ENCODE measurements at regions of chr13 and their contacts with region 1.

Region 1: GRCh38 chr13:39263033-39263432 is 224.8 kb downstream of the NHLRC3 start:
- DNase-seq: peak; percentile 55
- CTCF ChIP-seq: peak; percentile 74

Region 2: GRCh38 chr13:39051157-39051556 is 211.9 kb before region 1 on chr13:
- CTCF ChIA-PET with region 1: interaction called, 11 read pairs
- POLR2A ChIA-PET with region 1: no interaction called
- DNase-seq: peak; percentile 23
- CTCF ChIP-seq: peak; percentile 46

Region 3: DNA sequence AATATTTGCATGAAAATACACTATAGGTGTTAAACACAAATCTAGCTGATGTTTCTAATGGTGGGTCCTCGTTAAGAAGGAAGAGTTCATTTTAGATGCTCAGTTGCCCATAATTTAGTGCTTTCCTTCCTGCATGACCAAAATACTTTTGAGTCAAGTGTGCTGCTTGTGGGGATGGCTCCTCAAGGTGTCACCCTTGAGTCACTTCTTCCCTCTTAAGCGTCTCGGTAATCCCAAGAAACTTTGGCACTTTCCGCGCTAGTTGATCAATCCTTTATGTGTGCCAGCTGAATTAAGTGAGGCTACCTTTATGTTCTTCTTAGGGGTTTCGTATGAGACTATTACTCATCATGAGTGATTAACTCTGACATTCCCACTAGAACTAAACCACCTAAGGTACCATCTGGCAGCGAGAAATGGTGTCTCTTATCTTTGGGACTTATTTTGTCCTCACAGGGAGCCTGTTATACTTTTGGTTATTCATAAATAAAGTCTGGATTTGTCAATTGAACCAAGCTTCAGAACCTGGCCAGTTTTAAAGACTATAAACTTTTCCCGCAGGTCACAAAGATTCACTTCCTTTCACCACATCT is 118.0 kb before region 1 on chr13:
- CTCF ChIA-PET with region 1: interaction called, 42 read pairs
- POLR2A ChIA-PET with region 1: no interaction called
- DNase-seq: peak; percentile 49
- CTCF ChIP-seq: peak; percentile 74

Measured in GM10248 (cell line).